PC-9 (cell line): ENCODE measurements at regions of chr10 and their contacts with region 1.

Region 1: DNA sequence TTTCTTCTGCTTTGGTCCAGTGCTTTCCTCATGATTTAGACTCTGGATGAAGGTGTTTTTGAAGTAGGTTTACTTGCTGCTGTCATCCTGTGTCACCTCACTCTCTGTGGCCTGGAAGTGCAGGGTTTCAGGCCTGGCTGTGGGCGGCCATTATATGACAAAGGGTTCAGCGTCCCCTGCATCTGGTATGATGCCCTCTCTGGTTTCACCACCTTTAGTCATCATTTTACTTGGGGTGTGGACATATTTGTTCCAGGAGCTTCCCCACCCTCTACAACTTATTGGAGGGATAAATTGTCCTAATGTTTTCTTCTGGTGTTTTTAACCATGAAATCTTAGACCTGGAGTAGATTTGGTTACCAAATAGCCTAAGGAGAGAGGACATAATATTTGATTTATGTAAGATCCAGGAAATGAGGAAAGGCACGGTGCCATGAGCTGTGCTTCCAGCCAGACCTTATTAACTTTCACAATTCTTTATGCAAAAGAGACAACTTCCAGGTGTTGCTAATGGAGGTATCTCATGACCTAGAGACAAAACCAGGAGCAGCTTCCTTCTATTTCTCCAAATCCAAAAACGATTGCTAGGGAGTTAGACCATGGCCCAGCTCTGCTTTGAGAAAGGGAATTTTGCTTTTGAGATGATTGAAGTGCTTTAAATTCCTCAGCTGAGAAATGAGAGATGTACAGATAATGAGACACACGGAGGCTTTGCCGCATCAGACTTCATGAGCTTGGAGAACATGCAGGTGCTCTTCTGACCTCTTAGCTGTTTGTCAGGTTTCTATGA is 20.8 kb downstream of the WBP1L start:
- DNase-seq: peak; percentile 18 to 57
- H3K4me3 ChIP-seq: no peak overlapping the region
- H3K27ac ChIP-seq: peak overlapping the region; percentile 34; the same call in 1 of the 2 replicates
- H3K4me1 ChIP-seq: peaks cover 6% of the 10 kb centered on the region; the same call in 1 of the 2 replicates
- H3K27me3 ChIP-seq: no peaks in the 10 kb centered on the region
- CTCF ChIP-seq: no peak

Region 2: GRCh38 chr10:102132563-102133372 is 631.8 kb before region 1 on chr10 and contains the start of gene PPRC1:
- CTCF ChIA-PET with region 1: no interaction called
- POLR2A ChIA-PET with region 1: no interaction called
- intact Hi-C with region 1: no loop called
- DNase-seq: peak; percentile 91 to 92
- H3K4me3 ChIP-seq: peak within 1 kb of the TSS; percentile 87
- H3K27ac ChIP-seq: peak within 1 kb of the TSS; percentile 89
- H3K4me1 ChIP-seq: peaks cover 26% of the 10 kb centered on the region
- H3K27me3 ChIP-seq: no peaks in the 10 kb centered on the region
- CTCF ChIP-seq: peak; percentile 83
- total RNA-seq, gene PPRC1: 22.9 and 25.1 TPM in 2 replicates

Region 3: DNA sequence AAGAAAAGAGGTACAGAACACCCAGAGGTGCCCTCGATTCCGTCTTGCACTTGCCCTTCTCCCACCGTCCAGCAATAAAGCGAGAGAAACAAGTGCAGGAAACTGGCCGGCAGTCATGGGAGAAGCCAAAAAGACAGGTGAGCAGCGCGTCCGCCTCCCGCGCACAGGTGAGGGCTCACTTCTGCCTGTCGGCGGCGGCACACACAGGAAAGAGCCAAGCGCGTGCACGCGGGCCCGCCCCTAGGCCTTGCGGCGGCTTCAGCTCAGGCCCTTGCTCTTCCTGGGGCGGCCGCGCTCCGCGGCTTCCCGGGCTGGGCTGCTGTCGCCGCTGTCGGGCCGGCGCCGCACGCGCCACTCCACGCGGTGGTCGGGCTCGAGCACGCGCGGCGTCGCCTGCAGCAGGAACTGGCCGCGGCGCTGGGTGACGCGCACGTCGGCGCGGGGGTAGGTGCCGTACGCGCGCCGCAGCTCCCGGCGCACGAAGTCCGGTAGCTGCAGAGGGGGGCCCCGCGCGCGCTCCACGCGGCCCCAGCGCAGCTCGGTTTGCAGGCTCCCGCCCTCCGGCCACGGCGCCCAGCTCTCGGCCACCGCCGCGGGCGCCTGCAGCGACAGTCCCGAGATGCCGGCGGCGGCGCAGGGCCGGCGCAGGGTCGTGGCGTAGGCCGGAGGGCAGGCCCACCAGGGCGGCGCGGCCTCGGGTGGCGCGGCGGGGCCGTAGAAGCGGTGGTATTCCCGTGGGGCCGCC is 314.2 kb before region 1 on chr10:
- CTCF ChIA-PET with region 1: no interaction called
- POLR2A ChIA-PET with region 1: no interaction called
- intact Hi-C with region 1: no loop called
- DNase-seq: peak; percentile 50 to 82
- H3K4me3 ChIP-seq: peak overlapping the region; percentile 77
- H3K27ac ChIP-seq: peak overlapping the region; percentile 59
- H3K4me1 ChIP-seq: peaks cover 17% of the 10 kb centered on the region
- H3K27me3 ChIP-seq: no peaks in the 10 kb centered on the region
- CTCF ChIP-seq: no peak

Region 4: DNA sequence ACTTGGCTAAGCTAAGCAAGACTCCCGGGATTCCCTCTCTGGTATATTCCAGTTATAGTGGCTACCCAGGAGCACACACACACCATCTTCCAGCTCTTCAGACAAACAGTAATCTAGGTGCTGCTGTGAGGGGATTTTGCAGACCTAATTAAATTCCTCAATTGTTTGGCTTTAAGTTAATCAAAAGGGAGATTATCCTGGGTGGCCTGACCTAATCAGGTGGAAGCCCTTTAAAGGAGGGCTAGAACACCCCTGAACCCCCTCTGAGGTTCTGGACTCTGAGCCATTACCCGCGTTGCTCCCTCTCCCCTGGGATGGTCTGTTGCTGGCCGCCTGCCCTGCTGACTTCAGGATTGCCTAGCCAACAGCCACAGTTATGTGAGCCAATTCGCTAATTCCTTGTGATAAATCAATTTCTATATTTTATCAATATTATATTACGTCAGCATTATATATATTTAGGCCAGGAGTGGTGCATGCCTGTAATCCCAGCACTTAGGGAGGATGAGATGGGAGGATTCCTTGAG is 43.7 kb before region 1 on chr10:
- CTCF ChIA-PET with region 1: interaction called, 16 read pairs
- POLR2A ChIA-PET with region 1: no interaction called
- intact Hi-C with region 1: no loop called
- DNase-seq: no peak
- H3K4me3 ChIP-seq: no peak overlapping the region
- H3K27ac ChIP-seq: no peak overlapping the region
- H3K4me1 ChIP-seq: no peaks in the 10 kb centered on the region
- H3K27me3 ChIP-seq: no peaks in the 10 kb centered on the region
- CTCF ChIP-seq: no peak